ENCODE measurements at regions of chr7 and their contacts with region 1.

Region 1: GRCh38 chr7:19708397-19709248 is at the start of gene POLR1F:
- DNase-seq: peak; percentile 95
- H3K4me3 ChIP-seq: peak within 1 kb of the TSS; percentile 98
- H3K27ac ChIP-seq: peak within 1 kb of the TSS; percentile 47
- H3K4me1 ChIP-seq: peaks cover 26% of the 10 kb centered on the region
- CTCF ChIP-seq: peak; percentile 86
- total RNA-seq, gene POLR1F: 17.7 and 25.1 TPM in 2 replicates

Region 2: DNA sequence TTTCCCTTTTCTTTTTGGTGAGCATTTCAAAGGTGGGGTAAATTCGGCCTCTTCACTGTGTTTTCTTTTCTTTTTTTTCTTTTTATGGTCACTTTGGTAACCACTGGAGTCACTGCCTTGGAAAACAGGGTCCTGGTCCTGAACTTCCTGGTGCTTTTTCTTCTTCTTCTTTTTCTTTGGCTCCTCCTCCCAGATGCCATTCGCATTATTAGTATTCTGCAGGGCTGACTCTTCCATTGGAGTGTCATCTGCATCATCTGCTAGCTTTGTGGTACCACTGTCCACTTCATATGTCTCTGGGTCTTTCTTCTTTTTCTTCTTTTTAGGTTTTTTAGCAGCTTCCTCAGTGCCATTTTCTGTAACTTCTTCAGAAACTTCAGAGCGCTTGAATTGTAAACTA is 10.3 kb before region 1 on chr7:
- CTCF ChIA-PET with region 1: interaction called, 6 read pairs
- POLR2A ChIA-PET with region 1: interaction called, 17 read pairs
- intact Hi-C with region 1: no loop called
- DNase-seq: no peak
- H3K4me3 ChIP-seq: no peak overlapping the region
- H3K27ac ChIP-seq: no peak overlapping the region
- H3K4me1 ChIP-seq: no peaks in the 10 kb centered on the region
- CTCF ChIP-seq: no peak

Region 3: GRCh38 chr7:20193227-20193777 is 484.7 kb after region 1 on chr7:
- CTCF ChIA-PET with region 1: no interaction called
- POLR2A ChIA-PET with region 1: no interaction called
- intact Hi-C with region 1: loop called (anchors 5 kb)
- DNase-seq: peak; percentile 45
- H3K4me3 ChIP-seq: peak overlapping the region; percentile 15
- H3K27ac ChIP-seq: peak overlapping the region; percentile 47
- H3K4me1 ChIP-seq: peaks cover 56% of the 10 kb centered on the region
- CTCF ChIP-seq: no peak

Measured in OCI-LY7 (cell line).